ENCODE measurements at regions of chr6 and their contacts with region 1.

Region 1: GRCh38 chr6:109526905-109527628 is 44.0 kb upstream of the ZBTB24 start:
- DNase-seq: peak in 2 of 5 donors; percentile 30 to 39
- ATAC-seq: peak in 3 of 4 donors; percentile 56 to 64 (median 60)
- H3K4me3 ChIP-seq: no peak overlapping the region
- H3K27ac ChIP-seq: no peak overlapping the region
- H3K4me1 ChIP-seq: no peaks in the 10 kb centered on the region
- H3K27me3 ChIP-seq: no peaks in the 10 kb centered on the region
- CTCF ChIP-seq: peak; percentile 32 to 68 (median 51)
- POLR2A ChIP-seq: no peak

Region 2: DNA sequence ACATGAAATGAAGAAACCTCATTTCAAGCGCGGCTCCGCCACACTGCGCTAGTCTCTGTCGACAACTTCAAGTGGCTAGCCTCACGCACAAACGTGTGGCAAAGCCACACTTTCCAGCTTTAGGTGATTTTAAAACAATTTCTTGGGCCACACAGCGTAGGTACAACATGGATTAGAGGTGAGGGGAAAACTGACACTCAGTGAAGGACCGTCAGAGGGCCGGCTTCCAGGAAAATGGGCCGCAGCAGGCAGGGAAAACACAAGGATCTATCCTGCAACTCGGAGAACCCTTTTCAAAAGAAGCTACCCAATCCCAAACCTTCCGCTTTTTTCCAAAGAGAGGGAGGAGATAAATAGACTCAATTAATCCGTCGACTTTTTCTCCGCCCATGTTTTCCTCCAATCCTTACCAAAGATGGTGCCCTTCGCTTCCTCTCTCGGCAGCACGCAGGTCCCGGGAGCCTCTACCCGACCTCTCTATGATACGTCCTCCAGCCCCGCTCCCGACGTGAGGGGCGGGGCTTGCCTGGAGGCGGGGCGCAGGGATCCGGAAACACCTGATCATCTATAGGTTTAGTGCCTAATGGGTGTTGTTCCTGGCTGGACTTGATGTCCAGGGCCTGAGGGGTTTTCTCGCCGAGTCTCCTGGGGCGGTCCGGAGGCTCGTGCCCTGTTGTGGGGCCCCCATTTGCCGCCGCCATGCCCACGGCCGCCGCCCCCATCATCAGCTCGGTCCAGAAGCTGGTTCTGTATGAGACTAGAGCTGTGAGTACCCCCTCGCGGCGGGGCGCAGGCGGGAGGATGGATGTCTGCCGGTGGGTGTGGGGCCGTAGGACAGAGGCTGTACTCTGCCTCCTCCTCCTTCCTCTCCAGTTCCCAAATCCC is 163.9 kb after region 1 on chr6 and contains the starts of genes AK9 and FIG4:
- intact Hi-C with region 1: loop called in 4 of 10 experiments (anchors 5 to 10 kb)
- DNase-seq: peak; percentile 92 to 95 (median 94)
- ATAC-seq: peak; percentile 99
- H3K4me3 ChIP-seq: peak within 1 kb of the TSS; percentile 57 to 97 (median 80)
- H3K27ac ChIP-seq: peak within 1 kb of the TSS; percentile 64 to 95 (median 82)
- H3K4me1 ChIP-seq: peaks cover 0 to 34% (median 15%) of the 10 kb centered on the region in 12 donors
- H3K27me3 ChIP-seq: no peaks in the 10 kb centered on the region
- CTCF ChIP-seq: peak in 6 of 12 donors; percentile 12 to 42 (median 21)
- POLR2A ChIP-seq: peak in 1 of 2 donors; percentile 64
- total RNA-seq, gene AK9: 7.7 to 17.0 (median 10.6) TPM
- total RNA-seq, gene FIG4: 6.9 to 17.2 (median 10.4) TPM

Region 3: GRCh38 chr6:110039364-110039980 is 512.4 kb after region 1 on chr6:
- intact Hi-C with region 1: loop called in 9 of 10 experiments (anchors 2 to 5 kb)
- DNase-seq: peak; percentile 75 to 90 (median 82)
- ATAC-seq: peak; percentile 79 to 94 (median 91)
- H3K4me3 ChIP-seq: peak overlapping the region in 10 of 12 donors; percentile 11 to 47 (median 31)
- H3K27ac ChIP-seq: peak overlapping the region in 1 of 12 donors; percentile 59
- H3K4me1 ChIP-seq: peaks cover 0 to 11% (median 0%) of the 10 kb centered on the region in 12 donors
- H3K27me3 ChIP-seq: no peaks in the 10 kb centered on the region
- CTCF ChIP-seq: peak; percentile 81 to 95 (median 88)
- POLR2A ChIP-seq: no peak

Region 4: GRCh38 chr6:110053395-110054240 is 526.6 kb after region 1 on chr6:
- intact Hi-C with region 1: loop called in 6 of 10 experiments (anchors 2 to 10 kb)
- DNase-seq: peak in 1 of 5 donors; percentile 19
- ATAC-seq: peak in 3 of 4 donors; percentile 44 to 72 (median 59)
- H3K4me3 ChIP-seq: no peak overlapping the region
- H3K27ac ChIP-seq: no peak overlapping the region
- H3K4me1 ChIP-seq: peaks cover 0 to 3% (median 0%) of the 10 kb centered on the region in 12 donors
- H3K27me3 ChIP-seq: peaks cover 0 to 4% (median 0%) of the 10 kb centered on the region in 9 donors
- CTCF ChIP-seq: peak; percentile 47 to 82 (median 71)
- POLR2A ChIP-seq: no peak

Region 5: DNA sequence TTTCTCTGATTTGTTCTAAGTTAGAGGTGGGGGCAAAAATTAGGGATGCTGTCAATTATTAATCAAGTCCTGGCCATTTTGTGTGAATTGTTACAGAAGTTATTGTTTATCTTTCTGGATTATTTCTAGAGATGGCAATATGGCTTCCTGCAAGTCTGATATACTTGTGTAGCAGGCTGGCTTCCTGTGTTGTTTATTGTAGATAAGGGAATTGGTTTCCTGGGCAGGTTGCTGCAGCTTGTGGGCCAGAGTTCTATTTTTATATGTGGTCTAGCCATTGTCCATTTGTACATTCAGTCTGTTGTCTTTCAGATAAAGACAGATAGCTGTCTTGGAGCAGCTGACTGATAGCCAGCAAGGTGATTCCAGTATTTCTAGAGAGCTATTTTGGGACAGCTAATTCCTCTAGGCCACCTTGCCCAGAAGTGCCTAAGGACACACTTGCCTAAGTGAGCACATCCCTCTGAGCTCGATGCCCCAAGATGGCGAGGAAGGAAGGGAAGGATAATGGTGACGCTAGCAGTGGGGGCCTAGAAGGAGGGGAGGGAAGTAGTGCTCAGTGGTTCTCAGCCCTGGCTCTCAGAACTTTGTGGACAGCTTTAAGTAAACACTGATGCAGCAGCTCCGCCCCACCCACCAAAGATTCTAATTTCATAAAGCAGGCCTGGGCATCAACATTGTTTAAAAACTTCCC is 862.8 kb after region 1 on chr6:
- intact Hi-C with region 1: loop called in 5 of 10 experiments (anchors 5 to 10 kb)
- DNase-seq: no peak
- ATAC-seq: peak in 3 of 4 donors; percentile 7 to 57 (median 29)
- H3K4me3 ChIP-seq: no peak overlapping the region
- H3K27ac ChIP-seq: peak overlapping the region in 1 of 12 donors; percentile 12
- H3K4me1 ChIP-seq: peaks cover 0 to 13% (median 5%) of the 10 kb centered on the region in 12 donors
- H3K27me3 ChIP-seq: no peaks in the 10 kb centered on the region
- CTCF ChIP-seq: no peak
- POLR2A ChIP-seq: no peak

Region 6: DNA sequence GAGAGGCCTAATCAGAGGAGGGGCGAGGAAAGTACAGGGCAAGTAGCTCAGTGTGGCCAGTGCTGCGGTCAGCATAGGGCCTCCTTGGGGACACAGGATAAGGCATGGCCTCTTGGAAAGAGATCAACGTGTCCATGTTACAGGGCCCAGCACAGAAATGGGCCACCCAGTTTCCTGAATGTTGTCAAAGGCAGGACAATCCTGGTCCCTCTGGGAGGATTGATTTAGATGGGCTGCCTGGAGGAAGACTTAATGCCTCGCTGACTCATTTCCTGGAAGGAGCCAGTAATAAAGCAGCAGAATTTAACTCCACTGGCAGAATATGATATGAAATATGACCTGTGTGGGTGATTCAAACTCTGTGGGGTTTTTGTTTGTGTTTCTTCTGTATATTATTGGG is 871.7 kb after region 1 on chr6:
- intact Hi-C with region 1: loop called in 3 of 10 experiments (anchors 5 to 10 kb)
- DNase-seq: no peak
- ATAC-seq: peak in 1 of 4 donors; percentile 38
- H3K4me3 ChIP-seq: no peak overlapping the region
- H3K27ac ChIP-seq: no peak overlapping the region
- H3K4me1 ChIP-seq: peaks cover 0 to 23% (median 7%) of the 10 kb centered on the region in 12 donors
- H3K27me3 ChIP-seq: no peaks in the 10 kb centered on the region
- CTCF ChIP-seq: no peak
- POLR2A ChIP-seq: no peak

Measured in heart left ventricle (tissue), 16 donors.